Sciatic nerve (tissue), 2 donors: ENCODE measurements at regions of chr2 and their contacts with region 1.

Region 1: DNA sequence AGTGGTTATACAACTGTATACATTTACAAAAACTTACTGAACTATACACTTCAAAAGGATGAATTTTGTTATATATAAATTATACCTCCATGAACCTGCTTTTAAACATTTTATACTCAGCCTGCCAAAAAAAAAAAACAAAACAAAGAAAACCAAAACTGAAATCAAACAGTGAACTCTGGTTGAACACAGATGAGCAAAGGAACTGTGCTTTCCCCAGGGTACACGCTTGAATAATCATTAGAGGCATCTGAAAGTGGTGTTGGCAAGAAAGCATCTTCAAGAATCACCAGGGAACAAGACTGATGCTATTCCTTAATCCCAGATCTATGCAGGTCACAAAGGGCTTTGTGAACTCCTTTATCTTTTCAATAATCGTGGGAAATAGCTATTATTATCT is 77.0 kb upstream of the LYPD1 start:
- DNase-seq: no peak
- ATAC-seq: no peak

Region 2: GRCh38 chr2:131673392-131674173 is 1073.5 kb before region 1 on chr2:
- intact Hi-C with region 1: loop called (anchors 10 kb)
- DNase-seq: peak; percentile 89
- ATAC-seq: peak; percentile 98